ENCODE measurements at regions of chr5 and their contacts with region 1.

Region 1: GRCh38 chr5:169980418-169981053 is at the start of gene INSYN2B:
- DNase-seq: peak; percentile 84
- ATAC-seq: peak; percentile 89
- H3K4me3 Mint-ChIP-seq: peak within 1 kb of the TSS; percentile 69
- H3K27ac Mint-ChIP-seq: peak within 1 kb of the TSS; percentile 70
- H3K4me1 Mint-ChIP-seq: peaks cover 50% of the 10 kb centered on the region
- H3K27me3 Mint-ChIP-seq: peaks cover 36% of the 10 kb centered on the region
- CTCF ChIP-seq: peak; percentile 46
- total RNA-seq, gene INSYN2B: not detected in 3 replicates

Region 2: DNA sequence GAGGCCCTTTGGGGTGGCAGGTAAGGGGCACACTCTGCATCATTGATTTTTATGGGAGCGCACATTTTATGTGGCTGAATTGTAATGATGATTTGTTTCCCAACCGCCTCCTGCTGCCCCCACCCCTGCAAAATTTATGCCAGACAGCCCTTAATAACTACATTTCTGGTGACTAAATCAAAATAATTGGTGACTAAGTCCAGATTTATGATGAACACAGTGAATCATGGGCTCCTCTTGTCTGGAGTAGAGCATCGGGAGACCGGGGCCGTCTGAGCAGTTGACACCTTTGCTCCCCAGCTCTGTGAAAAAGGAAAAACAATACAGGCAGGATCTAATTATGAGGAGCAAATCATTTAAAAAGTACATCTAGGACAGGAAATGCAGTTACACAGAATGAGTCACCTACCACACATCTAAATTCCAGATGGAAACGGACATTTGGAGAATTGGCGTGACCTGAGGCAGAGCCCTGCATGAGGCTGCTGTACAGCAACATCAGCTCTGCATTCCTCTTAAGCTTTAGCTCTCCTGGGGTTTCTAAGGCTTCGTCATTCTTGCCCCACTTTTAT is 284.5 kb before region 1 on chr5:
- CTCF ChIA-PET with region 1: interaction called, 50 read pairs
- POLR2A ChIA-PET with region 1: no interaction called
- DNase-seq: no peak
- ATAC-seq: no peak
- H3K4me3 Mint-ChIP-seq: no peak overlapping the region
- H3K27ac Mint-ChIP-seq: no peak overlapping the region
- H3K4me1 Mint-ChIP-seq: no peaks in the 10 kb centered on the region
- H3K27me3 Mint-ChIP-seq: no peaks in the 10 kb centered on the region
- CTCF ChIP-seq: no peak

Region 3: DNA sequence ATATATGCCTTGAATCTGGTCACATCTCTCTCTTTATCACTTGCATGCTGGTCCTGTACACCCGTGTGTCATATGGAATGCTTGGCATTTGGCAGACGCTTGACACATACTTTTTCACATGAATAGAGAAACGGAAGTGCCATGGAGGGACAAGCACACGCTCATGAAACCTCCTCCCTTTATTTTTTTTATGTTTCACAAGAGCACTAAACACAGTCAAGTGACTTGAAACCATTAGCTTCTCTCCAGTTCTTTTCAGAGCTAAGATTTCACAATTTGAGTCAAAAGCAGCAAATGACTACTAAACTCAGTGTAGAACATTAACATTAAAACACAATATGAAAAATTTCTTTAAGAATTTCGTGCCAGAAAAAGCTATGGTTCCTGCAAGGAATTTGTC is 192.4 kb before region 1 on chr5:
- CTCF ChIA-PET with region 1: no interaction called
- POLR2A ChIA-PET with region 1: no interaction called
- DNase-seq: no peak
- ATAC-seq: no peak
- H3K4me3 Mint-ChIP-seq: no peak overlapping the region
- H3K27ac Mint-ChIP-seq: no peak overlapping the region
- H3K4me1 Mint-ChIP-seq: no peaks in the 10 kb centered on the region
- H3K27me3 Mint-ChIP-seq: no peaks in the 10 kb centered on the region
- CTCF ChIP-seq: no peak

Region 4: DNA sequence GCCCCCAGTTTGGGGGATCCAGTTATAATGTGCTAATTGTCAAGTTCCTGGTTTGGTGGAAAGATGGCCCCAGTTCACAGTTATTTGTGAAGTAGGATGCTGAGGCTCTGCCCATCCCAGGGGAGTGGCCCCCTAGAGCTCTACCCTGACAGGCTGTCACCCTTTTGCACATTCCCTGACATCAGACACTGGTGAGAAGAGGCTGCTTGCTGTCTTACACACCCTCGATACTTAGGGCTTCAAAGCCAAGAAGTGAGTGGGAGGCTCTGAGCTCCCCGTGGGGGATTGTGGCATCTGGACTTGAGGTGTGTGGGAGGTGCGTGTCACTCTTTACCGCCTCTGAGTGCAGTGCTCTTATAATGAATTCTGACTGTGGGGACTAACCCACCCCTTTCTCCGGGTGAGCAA is 175.0 kb before region 1 on chr5:
- CTCF ChIA-PET with region 1: interaction called, 36 read pairs
- POLR2A ChIA-PET with region 1: no interaction called
- DNase-seq: no peak
- ATAC-seq: no peak
- H3K4me3 Mint-ChIP-seq: no peak overlapping the region
- H3K27ac Mint-ChIP-seq: no peak overlapping the region
- H3K4me1 Mint-ChIP-seq: peaks cover 43% of the 10 kb centered on the region
- H3K27me3 Mint-ChIP-seq: peaks cover 5% of the 10 kb centered on the region
- CTCF ChIP-seq: no peak

Region 5: DNA sequence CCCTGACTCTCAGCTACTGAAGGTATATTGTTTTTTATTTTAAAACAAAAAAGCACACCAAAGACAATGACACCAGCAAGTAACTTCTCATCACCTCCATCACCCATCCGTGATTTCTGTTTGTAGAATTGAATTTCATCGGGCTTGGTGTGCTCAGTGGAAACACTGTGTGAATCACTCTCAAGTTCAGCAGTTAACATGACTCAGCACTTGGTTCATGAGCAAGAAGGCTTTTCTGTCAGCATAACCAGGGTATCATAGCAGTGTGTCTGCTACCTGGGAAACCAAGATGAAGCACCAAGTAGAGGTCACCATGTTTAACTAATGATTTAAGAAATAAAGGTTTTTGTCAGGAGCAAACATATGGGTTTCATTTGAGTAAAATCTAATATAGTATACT is 124.0 kb before region 1 on chr5:
- CTCF ChIA-PET with region 1: no interaction called
- POLR2A ChIA-PET with region 1: no interaction called
- DNase-seq: no peak
- ATAC-seq: no peak
- H3K4me3 Mint-ChIP-seq: no peak overlapping the region
- H3K27ac Mint-ChIP-seq: no peak overlapping the region
- H3K4me1 Mint-ChIP-seq: peaks cover 5% of the 10 kb centered on the region; the same call in 1 of the 2 replicates
- H3K27me3 Mint-ChIP-seq: no peaks in the 10 kb centered on the region
- CTCF ChIP-seq: no peak

Region 6: GRCh38 chr5:169904059-169904458 is 76.5 kb before region 1 on chr5:
- CTCF ChIA-PET with region 1: interaction called, 17 read pairs
- POLR2A ChIA-PET with region 1: no interaction called
- DNase-seq: no peak
- ATAC-seq: no peak
- H3K4me3 Mint-ChIP-seq: no peak overlapping the region
- H3K27ac Mint-ChIP-seq: no peak overlapping the region
- H3K4me1 Mint-ChIP-seq: peaks cover 17% of the 10 kb centered on the region
- H3K27me3 Mint-ChIP-seq: peaks cover 20% of the 10 kb centered on the region
- CTCF ChIP-seq: no peak

Region 7: DNA sequence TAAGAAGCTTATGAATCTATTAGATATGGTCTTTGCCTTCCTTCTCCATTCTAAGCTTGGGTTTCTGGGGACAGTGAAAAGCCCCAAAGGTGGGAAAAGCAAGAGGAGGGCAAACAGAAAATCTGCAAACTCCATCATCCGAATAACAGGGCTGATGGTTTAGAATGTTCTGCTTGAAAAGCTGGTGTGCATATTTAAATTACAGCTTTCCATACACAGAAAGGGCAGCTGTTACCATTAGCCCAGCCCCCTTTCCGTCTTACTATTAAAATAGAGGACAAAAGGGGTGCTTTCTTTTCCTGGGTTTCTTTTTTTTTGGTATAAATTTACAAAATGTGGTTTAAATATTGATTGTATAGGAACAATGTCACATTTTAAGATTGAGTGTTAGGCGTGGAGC is 22.3 kb before region 1 on chr5:
- CTCF ChIA-PET with region 1: interaction called, 15 read pairs
- POLR2A ChIA-PET with region 1: no interaction called
- DNase-seq: no peak
- ATAC-seq: no peak
- H3K4me3 Mint-ChIP-seq: no peak overlapping the region
- H3K27ac Mint-ChIP-seq: no peak overlapping the region
- H3K4me1 Mint-ChIP-seq: peaks cover 13% of the 10 kb centered on the region
- H3K27me3 Mint-ChIP-seq: no peaks in the 10 kb centered on the region; the same call in 1 of the 2 replicates
- CTCF ChIP-seq: no peak

Region 8: DNA sequence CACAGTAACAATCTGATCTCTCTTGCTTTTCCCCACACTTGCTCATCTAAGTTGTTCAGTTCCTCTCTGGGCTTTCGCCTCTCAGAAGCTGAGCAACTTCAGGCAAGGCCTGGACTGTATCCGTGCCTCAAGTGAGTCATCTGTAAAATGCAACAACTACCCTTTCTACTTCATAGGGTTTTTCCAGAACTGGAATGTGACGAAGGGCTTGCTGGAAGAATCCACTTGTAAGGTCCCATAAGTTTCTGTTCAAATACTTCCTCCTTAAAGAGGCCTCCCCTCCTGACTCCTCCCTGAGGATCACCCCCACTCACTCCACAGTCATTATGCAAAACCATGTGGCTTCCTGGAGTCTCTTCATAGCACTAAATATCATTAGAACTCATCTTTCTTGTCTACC is 17.3 kb after region 1 on chr5:
- CTCF ChIA-PET with region 1: interaction called, 22 read pairs
- POLR2A ChIA-PET with region 1: no interaction called
- DNase-seq: no peak
- ATAC-seq: no peak
- H3K4me3 Mint-ChIP-seq: no peak overlapping the region
- H3K27ac Mint-ChIP-seq: no peak overlapping the region
- H3K4me1 Mint-ChIP-seq: 0 out of 2 replicates have a peak, but pooled peaks cover 3% of the 10 kb centered on the region
- H3K27me3 Mint-ChIP-seq: no peaks in the 10 kb centered on the region
- CTCF ChIP-seq: no peak

Region 9: DNA sequence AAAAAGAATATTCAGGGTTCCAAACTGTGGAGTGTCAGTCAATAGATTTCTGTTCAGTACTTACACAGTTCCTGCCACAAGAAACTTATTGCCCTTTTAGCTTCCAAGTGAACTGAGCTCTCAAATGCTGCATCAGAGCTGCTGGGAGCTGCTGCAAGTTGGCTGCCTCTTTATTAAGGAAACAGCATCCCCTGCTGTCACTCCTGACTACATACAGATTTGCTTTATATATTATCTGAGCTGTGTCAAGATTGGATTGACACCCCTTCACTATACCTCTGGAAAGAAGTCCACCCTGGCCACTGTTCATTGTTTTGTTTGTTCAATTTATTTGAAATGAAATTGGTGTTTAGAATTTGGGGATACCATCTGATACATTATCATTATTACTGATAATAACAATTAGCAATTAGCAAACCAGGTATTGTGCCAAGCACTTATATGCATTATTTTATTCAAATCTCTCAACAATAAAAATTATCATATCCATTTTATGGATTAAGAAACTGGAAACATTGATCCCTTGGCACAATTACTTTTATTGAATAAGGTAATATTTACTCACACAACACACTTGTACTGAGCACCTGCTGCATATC is 235.8 kb after region 1 on chr5:
- CTCF ChIA-PET with region 1: interaction called, 10 read pairs
- POLR2A ChIA-PET with region 1: no interaction called
- DNase-seq: peak; percentile 31
- ATAC-seq: peak; percentile 87
- H3K4me3 Mint-ChIP-seq: no peak overlapping the region
- H3K27ac Mint-ChIP-seq: no peak overlapping the region
- H3K4me1 Mint-ChIP-seq: peaks cover 22% of the 10 kb centered on the region
- H3K27me3 Mint-ChIP-seq: peaks cover 24% of the 10 kb centered on the region
- CTCF ChIP-seq: peak; percentile 29; the same call in 1 of the 2 replicates

Region 10: DNA sequence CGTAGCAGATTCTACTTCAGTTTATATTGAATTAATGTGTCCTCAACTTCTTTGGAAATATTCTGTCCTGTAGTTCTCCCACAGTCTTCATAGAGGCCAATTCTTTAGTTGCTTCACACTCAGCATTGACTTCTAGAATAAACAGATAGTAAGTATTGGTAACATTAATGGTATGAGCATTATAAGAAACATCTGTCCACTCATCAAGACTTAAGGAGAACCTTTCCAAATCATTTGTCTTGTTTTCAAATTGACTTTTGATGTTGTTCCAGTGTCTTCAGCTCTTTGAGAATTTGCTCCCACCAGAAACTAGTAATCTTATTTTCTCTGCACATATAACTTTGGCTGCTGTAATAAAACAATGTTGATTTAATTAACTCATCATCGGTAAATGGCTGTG is 899.5 kb after region 1 on chr5:
- CTCF ChIA-PET with region 1: no interaction called
- POLR2A ChIA-PET with region 1: no interaction called
- DNase-seq: no peak
- ATAC-seq: no peak
- H3K4me3 Mint-ChIP-seq: no peak overlapping the region
- H3K27ac Mint-ChIP-seq: no peak overlapping the region
- H3K4me1 Mint-ChIP-seq: peaks cover 20% of the 10 kb centered on the region
- H3K27me3 Mint-ChIP-seq: no peaks in the 10 kb centered on the region
- CTCF ChIP-seq: no peak